ENCODE measurements at regions of chr10 and their contacts with region 1.

Region 1: GRCh38 chr10:30783939-30784500 is 154.5 kb upstream of the LYZL2 start:
- DNase-seq: peak; percentile 82
- H3K4me3 ChIP-seq: no peak overlapping the region
- H3K4me3 Mint-ChIP-seq: peak overlapping the region; percentile 45
- H3K27ac Mint-ChIP-seq: no peak overlapping the region
- H3K4me1 ChIP-seq: no peaks in the 10 kb centered on the region
- H3K4me1 Mint-ChIP-seq: no peaks in the 10 kb centered on the region
- H3K27me3 ChIP-seq: peaks cover 1% of the 10 kb centered on the region; the same call in 1 of the 2 replicates
- H3K27me3 Mint-ChIP-seq: peaks cover 16% of the 10 kb centered on the region
- CTCF ChIP-seq: peak; percentile 83 to 96

Region 2: DNA sequence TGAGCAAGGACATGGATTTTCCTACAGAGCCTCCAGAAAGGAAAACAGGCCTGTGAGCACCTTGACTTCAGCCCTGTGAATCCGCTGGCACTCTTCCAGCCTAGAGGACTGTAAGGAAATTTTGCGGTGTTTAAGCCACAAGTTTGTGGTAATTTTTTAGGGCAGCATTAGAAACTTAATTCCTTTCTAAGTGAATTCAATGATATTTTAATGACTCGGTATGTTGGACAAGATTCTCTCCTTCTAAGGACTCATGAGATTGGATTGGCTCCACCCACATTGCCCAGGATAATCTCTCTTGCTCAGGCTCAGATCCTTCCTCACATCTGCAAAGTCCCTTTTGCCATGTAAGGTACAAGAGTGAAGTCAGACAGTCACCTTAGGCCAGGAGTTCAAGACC is 158.9 kb before region 1 on chr10:
- CTCF ChIA-PET with region 1: no interaction called
- POLR2A ChIA-PET with region 1: no interaction called
- intact Hi-C with region 1: no loop called
- DNase-seq: no peak
- H3K4me3 ChIP-seq: no peak overlapping the region
- H3K4me3 Mint-ChIP-seq: no peak overlapping the region
- H3K27ac Mint-ChIP-seq: no peak overlapping the region
- H3K4me1 ChIP-seq: no peaks in the 10 kb centered on the region
- H3K4me1 Mint-ChIP-seq: no peaks in the 10 kb centered on the region
- H3K27me3 ChIP-seq: no peaks in the 10 kb centered on the region
- H3K27me3 Mint-ChIP-seq: peaks cover 20% of the 10 kb centered on the region
- CTCF ChIP-seq: no peak

Region 3: GRCh38 chr10:30687698-30688219 is 96.3 kb before region 1 on chr10:
- CTCF ChIA-PET with region 1: no interaction called
- POLR2A ChIA-PET with region 1: no interaction called
- intact Hi-C with region 1: loop called (anchors 5 kb)
- DNase-seq: peak; percentile 82 to 92
- H3K4me3 ChIP-seq: no peak overlapping the region
- H3K4me3 Mint-ChIP-seq: no peak overlapping the region
- H3K27ac Mint-ChIP-seq: no peak overlapping the region
- H3K4me1 ChIP-seq: no peaks in the 10 kb centered on the region; the same call in 1 of the 2 replicates
- H3K4me1 Mint-ChIP-seq: no peaks in the 10 kb centered on the region
- H3K27me3 ChIP-seq: no peaks in the 10 kb centered on the region; the same call in 1 of the 2 replicates
- H3K27me3 Mint-ChIP-seq: peaks cover 28% of the 10 kb centered on the region
- CTCF ChIP-seq: peak; percentile 90 to 98

Region 4: DNA sequence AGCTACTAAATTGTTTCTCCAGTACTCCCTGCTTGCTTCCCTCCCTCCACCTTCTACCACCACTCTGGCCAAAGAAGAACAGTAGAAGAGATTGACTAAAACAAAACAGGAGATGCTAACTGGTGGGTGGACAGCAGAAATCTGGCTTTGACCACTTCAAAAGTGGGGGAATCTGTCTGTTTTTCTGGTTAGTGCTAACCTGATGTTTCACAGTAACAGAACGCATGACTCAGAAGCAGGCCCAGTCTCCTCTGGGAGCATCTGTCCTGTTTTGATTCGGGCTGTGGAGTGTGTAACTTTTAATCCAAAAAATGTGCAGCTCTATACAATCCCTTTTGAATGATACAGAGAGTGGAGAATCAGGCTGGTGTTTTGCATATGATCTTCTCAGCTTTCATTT is 280.3 kb after region 1 on chr10:
- CTCF ChIA-PET with region 1: no interaction called
- POLR2A ChIA-PET with region 1: no interaction called
- intact Hi-C with region 1: loop called (anchors 10 kb)
- DNase-seq: no peak
- H3K4me3 ChIP-seq: no peak overlapping the region
- H3K4me3 Mint-ChIP-seq: no peak overlapping the region
- H3K27ac Mint-ChIP-seq: no peak overlapping the region
- H3K4me1 ChIP-seq: no peaks in the 10 kb centered on the region
- H3K4me1 Mint-ChIP-seq: no peaks in the 10 kb centered on the region
- H3K27me3 ChIP-seq: no peaks in the 10 kb centered on the region
- H3K27me3 Mint-ChIP-seq: peaks cover 11% of the 10 kb centered on the region
- CTCF ChIP-seq: no peak

Region 5: DNA sequence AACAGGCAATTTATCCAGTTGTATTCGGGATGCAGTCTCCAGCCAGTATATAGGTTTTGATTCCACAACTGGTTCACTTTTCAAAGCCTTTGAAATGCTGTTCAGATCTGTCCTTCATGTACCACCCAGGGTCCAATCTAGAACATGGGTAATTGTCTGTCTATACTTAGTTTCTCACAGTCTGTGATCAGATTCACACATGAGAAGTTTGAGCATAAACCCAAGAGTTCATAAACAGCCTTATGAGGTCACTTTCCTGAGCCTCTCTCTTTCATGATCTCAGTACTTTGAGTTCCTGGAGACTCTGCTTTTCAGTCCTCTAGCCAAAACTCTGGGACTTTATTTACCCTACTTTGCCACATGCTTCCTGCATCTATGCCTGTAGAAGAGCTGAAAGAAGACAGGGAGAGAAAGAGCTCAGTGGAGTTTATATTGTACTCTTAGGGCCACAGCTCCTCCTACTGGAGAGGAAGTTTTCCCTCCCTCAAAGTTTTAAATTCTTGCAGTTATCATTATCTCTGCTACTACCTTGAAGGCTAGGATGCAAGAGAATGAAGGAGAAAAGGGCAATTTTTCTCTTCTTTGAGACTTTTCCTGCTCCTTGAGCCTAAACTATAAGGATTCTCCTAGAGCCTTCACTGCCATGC is 707.0 kb after region 1 on chr10:
- CTCF ChIA-PET with region 1: interaction called, 3 read pairs
- POLR2A ChIA-PET with region 1: no interaction called
- intact Hi-C with region 1: loop called (anchors 1 kb)
- DNase-seq: peak in 1 of 2 experiments; percentile 32
- H3K4me3 ChIP-seq: no peak overlapping the region
- H3K4me3 Mint-ChIP-seq: no peak overlapping the region
- H3K27ac Mint-ChIP-seq: no peak overlapping the region
- H3K4me1 ChIP-seq: no peaks in the 10 kb centered on the region
- H3K4me1 Mint-ChIP-seq: no peaks in the 10 kb centered on the region
- H3K27me3 ChIP-seq: no peaks in the 10 kb centered on the region
- H3K27me3 Mint-ChIP-seq: peaks cover 5% of the 10 kb centered on the region
- CTCF ChIP-seq: peak; percentile 56 to 72

Region 6: DNA sequence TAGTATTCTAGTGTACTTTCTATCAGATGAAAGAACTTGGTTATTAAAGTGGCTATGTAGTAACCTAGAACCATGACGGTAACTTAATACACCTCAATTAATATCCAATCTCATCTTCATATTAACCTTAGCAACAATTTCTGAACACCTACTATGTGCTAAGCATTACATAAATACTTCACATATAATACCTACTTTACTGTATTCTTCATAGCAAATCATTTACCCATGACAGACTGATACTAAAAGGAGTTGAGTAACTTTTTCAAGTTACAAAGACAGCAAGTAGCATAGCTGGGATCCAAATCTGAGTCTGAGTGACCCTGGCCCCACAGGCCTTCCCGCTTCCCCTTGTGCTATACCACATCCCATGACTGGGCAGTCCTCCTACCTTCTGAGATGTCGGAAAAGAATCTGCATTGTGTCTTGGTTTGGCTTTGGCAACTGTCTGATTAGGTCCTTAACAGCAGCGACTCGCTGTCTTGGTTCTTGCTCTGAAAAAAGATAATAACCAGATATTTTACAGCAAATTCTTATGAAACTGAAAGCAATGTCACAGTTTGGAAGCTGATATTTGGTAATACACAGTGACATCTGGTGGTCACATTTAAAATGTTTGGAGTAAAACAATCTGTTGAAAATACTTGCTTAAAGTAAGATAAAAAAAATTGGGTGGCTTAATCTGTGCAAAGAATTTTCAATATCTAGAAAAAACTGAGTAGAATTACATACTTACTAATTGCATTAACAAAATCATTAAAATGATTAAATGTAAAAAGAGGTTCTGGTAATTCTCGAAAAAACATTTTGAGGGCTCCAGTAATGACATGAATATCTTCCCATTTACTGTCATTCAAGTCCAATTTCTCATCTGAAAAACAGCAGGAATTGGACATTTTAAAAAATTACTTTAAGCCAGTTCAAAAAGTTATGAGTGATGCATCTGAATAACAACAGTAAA is 1024.5 kb after region 1 on chr10:
- CTCF ChIA-PET with region 1: interaction called, 5 read pairs
- POLR2A ChIA-PET with region 1: no interaction called
- intact Hi-C with region 1: loop called (anchors 1 kb)
- DNase-seq: peak in 1 of 2 experiments; percentile 42
- H3K4me3 ChIP-seq: no peak overlapping the region
- H3K4me3 Mint-ChIP-seq: no peak overlapping the region
- H3K27ac Mint-ChIP-seq: no peak overlapping the region
- H3K4me1 ChIP-seq: no peaks in the 10 kb centered on the region
- H3K4me1 Mint-ChIP-seq: no peaks in the 10 kb centered on the region
- H3K27me3 ChIP-seq: no peaks in the 10 kb centered on the region
- H3K27me3 Mint-ChIP-seq: no peaks in the 10 kb centered on the region
- CTCF ChIP-seq: peak; percentile 52 to 69

Measured in Caco-2 (cell line).